ENCODE measurements at regions of chr4 and their contacts with region 1.

Region 1: DNA sequence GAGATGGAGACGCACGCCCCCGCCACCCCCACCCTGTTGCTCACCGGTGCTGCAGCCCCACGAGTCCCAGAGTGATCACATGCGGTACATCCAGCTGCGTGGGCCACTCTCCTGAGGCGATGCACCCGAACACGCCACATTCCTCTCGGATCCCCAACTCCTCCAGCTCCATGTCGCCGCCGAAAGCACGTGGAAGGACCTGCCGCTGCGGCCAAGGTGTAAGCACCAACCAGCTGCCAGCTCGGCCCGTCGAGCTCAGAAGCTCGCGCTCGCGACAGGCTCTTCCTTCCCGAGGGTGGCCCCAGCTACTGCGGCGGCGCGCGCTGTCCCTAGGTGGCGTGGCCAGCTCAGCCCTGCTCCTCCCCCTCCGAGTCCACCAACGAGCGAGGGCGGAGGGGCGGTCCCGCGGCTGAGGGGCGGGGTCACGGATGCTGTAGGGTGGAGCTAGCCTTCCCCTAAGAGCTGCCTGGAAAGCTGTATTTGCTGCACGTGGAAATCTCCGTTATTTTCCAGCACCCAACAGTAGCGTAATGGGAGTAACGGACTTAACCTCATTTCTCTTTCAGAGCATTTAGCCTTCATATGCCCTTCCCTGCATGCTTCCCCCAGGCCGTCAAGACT is at the start of gene PPAT:
- DNase-seq: peak; percentile 99
- H3K4me3 Mint-ChIP-seq: peak within 1 kb of the TSS; percentile 84
- H3K27ac Mint-ChIP-seq: peak within 1 kb of the TSS; percentile 92
- H3K4me1 Mint-ChIP-seq: peaks cover 51% of the 10 kb centered on the region
- H3K27me3 Mint-ChIP-seq: no peaks in the 10 kb centered on the region

Region 2: GRCh38 chr4:56387023-56388001 is 48.1 kb before region 1 on chr4 and contains the start of gene AASDH:
- CTCF ChIA-PET with region 1: interaction called, 10 read pairs
- DNase-seq: peak; percentile 97
- H3K4me3 Mint-ChIP-seq: peak within 1 kb of the TSS; percentile 82
- H3K27ac Mint-ChIP-seq: peak within 1 kb of the TSS; percentile 100
- H3K4me1 Mint-ChIP-seq: peaks cover 45% of the 10 kb centered on the region
- H3K27me3 Mint-ChIP-seq: no peaks in the 10 kb centered on the region